ENCODE measurements at regions of chr16 and their contacts with region 1.

Region 1: GRCh38 chr16:82671741-82672140 is 45.0 kb downstream of the CDH13 start:
- DNase-seq: peak in 12 of 35 experiments; percentile 6 to 67 (median 20)
- ATAC-seq: no peak
- H3K4me3 ChIP-seq: no peak overlapping the region
- H3K4me3 Mint-ChIP-seq: no peak overlapping the region
- H3K27ac ChIP-seq: no peak overlapping the region
- H3K27ac Mint-ChIP-seq: no peak overlapping the region
- H3K4me1 ChIP-seq: no peaks in the 10 kb centered on the region
- H3K4me1 Mint-ChIP-seq: no peaks in the 10 kb centered on the region
- H3K27me3 ChIP-seq: peaks cover 0 to 3% of the 10 kb centered on the region in 2 experiments
- H3K27me3 Mint-ChIP-seq: peaks cover 2 to 5% of the 10 kb centered on the region in 2 donors

Region 2: DNA sequence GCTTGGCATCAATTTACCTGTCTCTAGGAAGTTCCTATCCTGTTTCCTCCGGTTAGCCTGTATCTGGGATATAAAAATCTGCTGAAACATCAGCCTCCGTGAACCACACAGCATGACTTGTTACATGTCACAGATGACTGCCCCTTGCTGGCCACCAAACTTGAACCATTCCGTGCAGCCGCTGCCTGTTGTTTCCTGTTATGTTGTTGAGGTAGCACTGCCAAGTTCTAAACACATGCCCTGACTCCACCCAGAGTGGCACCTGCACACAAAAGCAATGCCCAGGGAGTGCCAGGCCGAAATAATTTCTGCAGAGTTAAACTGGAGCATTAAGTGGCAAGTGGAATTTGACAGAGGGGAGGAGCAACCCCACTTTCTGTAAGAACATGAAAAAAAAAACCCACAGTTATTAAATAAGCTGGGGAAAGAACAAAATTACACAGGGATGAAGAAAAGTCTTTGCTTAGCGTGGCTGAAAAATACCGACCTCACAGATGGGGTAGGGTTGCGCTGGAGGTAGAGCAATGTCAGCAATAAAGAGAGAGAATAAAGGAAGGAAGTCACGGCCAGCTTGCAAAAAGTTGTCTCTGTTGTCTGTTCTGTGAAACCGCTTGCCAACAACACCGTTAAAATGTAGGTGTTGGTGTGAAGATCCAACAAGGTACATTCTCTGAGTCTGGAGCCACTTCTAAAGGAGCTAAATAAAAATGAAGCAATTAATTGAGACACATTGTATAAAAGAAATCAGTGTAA is 219.6 kb before region 1 on chr16:
- CTCF ChIA-PET with region 1: no interaction called
- POLR2A ChIA-PET with region 1: interaction called in 1 of 2 experiments, 19 read pairs
- DNase-seq: peak in 3 of 35 experiments; percentile 8 to 48 (median 15)
- ATAC-seq: no peak
- H3K4me3 ChIP-seq: no peak overlapping the region
- H3K4me3 Mint-ChIP-seq: no peak overlapping the region
- H3K27ac ChIP-seq: no peak overlapping the region
- H3K27ac Mint-ChIP-seq: peak overlapping the region in 1 of 2 donors; percentile 9
- H3K4me1 ChIP-seq: peaks cover 0 to 29% of the 10 kb centered on the region in 2 experiments
- H3K4me1 Mint-ChIP-seq: no peaks in the 10 kb centered on the region
- H3K27me3 ChIP-seq: no peaks in the 10 kb centered on the region
- H3K27me3 Mint-ChIP-seq: peaks cover 4 to 7% of the 10 kb centered on the region in 2 donors

Region 3: DNA sequence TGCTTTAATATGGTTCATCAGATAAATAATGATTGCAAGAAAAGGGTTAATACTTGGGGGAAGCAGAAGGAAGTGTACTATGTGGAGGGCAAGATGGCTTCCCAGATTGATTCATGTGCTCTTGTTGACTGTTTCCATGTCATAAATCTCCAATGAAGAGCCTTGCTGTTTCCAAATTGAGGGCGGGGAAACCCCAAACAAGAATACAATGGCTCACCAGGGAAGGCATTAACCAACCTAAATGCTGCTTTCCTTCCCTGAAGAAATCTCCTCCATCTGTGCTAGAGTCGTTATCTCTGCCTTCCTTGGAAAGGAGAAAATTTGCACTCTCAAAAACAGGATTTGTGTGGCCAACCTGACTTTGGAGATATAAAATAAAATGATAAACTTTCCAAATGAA is 73.0 kb before region 1 on chr16:
- CTCF ChIA-PET with region 1: no interaction called
- POLR2A ChIA-PET with region 1: no interaction called
- DNase-seq: no peak
- ATAC-seq: no peak
- H3K4me3 ChIP-seq: no peak overlapping the region
- H3K4me3 Mint-ChIP-seq: no peak overlapping the region
- H3K27ac ChIP-seq: no peak overlapping the region
- H3K27ac Mint-ChIP-seq: no peak overlapping the region
- H3K4me1 ChIP-seq: no peaks in the 10 kb centered on the region
- H3K4me1 Mint-ChIP-seq: peaks cover 0 to 3% (median 0%) of the 10 kb centered on the region in 3 donors
- H3K27me3 ChIP-seq: no peaks in the 10 kb centered on the region
- H3K27me3 Mint-ChIP-seq: peaks cover 7 to 18% of the 10 kb centered on the region in 2 donors

Region 4: DNA sequence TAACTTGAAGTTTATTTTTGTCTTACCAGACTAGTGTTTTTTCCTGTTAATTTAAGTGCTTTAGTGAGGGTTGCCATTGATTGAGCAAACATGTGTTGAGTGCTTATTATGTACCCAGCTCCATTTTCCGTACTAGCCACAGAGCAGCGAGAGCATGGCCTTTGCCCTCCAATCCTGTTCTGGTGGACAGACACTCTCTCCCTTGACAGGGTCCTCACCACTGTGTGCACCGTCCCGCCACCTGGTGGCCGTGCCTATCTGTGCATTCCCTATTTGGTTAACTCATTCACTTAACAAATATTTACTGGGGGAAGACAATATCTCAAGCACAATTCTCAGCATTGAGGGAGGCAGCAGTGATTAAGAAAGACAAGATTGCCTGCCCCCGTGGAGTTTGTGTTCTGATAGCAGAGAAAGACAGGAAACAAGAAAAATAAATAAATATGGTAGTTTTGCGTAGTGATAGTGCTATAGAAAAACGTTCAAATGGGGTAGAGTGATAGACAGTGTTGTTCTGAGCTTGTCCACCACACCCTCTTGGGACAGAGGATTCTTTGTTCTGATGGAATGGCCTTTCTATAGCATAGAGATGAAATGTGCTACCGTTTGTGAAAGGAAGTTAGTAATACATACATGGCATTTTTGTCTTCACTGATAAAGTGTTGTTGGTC is 31.9 kb before region 1 on chr16:
- CTCF ChIA-PET with region 1: interaction called in 1 of 2 experiments, 11 read pairs
- POLR2A ChIA-PET with region 1: no interaction called
- DNase-seq: peak in 28 of 35 experiments; percentile 7 to 64 (median 34)
- ATAC-seq: peak in 3 of 4 experiments; percentile 56 to 64 (median 62)
- H3K4me3 ChIP-seq: no peak overlapping the region
- H3K4me3 Mint-ChIP-seq: no peak overlapping the region
- H3K27ac ChIP-seq: no peak overlapping the region
- H3K27ac Mint-ChIP-seq: no peak overlapping the region
- H3K4me1 ChIP-seq: peaks cover 0 to 3% of the 10 kb centered on the region in 2 experiments
- H3K4me1 Mint-ChIP-seq: peaks cover 0 to 6% (median 5%) of the 10 kb centered on the region in 3 donors
- H3K27me3 ChIP-seq: no peaks in the 10 kb centered on the region
- H3K27me3 Mint-ChIP-seq: peaks cover 2 to 5% of the 10 kb centered on the region in 2 donors

Region 5: GRCh38 chr16:82653550-82654511 is 17.9 kb before region 1 on chr16:
- CTCF ChIA-PET with region 1: interaction called, 4 to 7 read pairs
- POLR2A ChIA-PET with region 1: interaction called in 1 of 2 experiments, 11 read pairs
- DNase-seq: peak in 33 of 35 experiments; percentile 8 to 83 (median 26)
- ATAC-seq: peak; percentile 69 to 71 (median 70)
- H3K4me3 ChIP-seq: no peak overlapping the region
- H3K4me3 Mint-ChIP-seq: peak overlapping the region; percentile 37 to 65 (median 44)
- H3K27ac ChIP-seq: peak overlapping the region; percentile 76
- H3K27ac Mint-ChIP-seq: peak overlapping the region; percentile 88 to 95
- H3K4me1 ChIP-seq: peaks cover 27 to 83% of the 10 kb centered on the region in 2 experiments
- H3K4me1 Mint-ChIP-seq: peaks cover 79 to 97% (median 90%) of the 10 kb centered on the region in 3 donors
- H3K27me3 ChIP-seq: no peaks in the 10 kb centered on the region
- H3K27me3 Mint-ChIP-seq: no peaks in the 10 kb centered on the region

Region 6: DNA sequence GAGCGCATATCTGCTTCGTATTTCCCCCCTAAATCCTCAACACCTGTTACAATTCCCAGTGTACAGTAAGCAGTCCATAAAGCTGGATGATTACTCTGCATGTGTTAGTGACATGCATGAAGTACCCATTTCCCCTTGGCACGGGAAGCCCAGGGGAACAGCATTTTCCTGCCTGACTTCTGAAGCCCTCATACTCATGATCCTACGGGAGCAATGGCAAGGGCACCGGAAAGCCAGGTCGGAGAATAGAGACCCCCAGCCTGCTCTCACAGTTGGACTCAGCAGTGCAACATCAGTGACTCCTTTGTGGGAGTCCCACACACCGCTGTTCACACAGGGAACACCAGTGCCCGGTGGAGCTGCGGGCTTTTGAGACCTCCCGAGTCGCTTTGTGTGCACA is 291.9 kb after region 1 on chr16:
- CTCF ChIA-PET with region 1: no interaction called
- POLR2A ChIA-PET with region 1: no interaction called
- DNase-seq: no peak
- ATAC-seq: no peak
- H3K4me3 ChIP-seq: no peak overlapping the region
- H3K4me3 Mint-ChIP-seq: no peak overlapping the region
- H3K27ac ChIP-seq: no peak overlapping the region
- H3K27ac Mint-ChIP-seq: no peak overlapping the region
- H3K4me1 ChIP-seq: no peaks in the 10 kb centered on the region
- H3K4me1 Mint-ChIP-seq: no peaks in the 10 kb centered on the region
- H3K27me3 ChIP-seq: no peaks in the 10 kb centered on the region
- H3K27me3 Mint-ChIP-seq: no peaks in the 10 kb centered on the region

Measured in T-cell (primary cell).